GM23248 (cell line): ENCODE measurements at regions of chr14 and their contacts with region 1.

Region 1: DNA sequence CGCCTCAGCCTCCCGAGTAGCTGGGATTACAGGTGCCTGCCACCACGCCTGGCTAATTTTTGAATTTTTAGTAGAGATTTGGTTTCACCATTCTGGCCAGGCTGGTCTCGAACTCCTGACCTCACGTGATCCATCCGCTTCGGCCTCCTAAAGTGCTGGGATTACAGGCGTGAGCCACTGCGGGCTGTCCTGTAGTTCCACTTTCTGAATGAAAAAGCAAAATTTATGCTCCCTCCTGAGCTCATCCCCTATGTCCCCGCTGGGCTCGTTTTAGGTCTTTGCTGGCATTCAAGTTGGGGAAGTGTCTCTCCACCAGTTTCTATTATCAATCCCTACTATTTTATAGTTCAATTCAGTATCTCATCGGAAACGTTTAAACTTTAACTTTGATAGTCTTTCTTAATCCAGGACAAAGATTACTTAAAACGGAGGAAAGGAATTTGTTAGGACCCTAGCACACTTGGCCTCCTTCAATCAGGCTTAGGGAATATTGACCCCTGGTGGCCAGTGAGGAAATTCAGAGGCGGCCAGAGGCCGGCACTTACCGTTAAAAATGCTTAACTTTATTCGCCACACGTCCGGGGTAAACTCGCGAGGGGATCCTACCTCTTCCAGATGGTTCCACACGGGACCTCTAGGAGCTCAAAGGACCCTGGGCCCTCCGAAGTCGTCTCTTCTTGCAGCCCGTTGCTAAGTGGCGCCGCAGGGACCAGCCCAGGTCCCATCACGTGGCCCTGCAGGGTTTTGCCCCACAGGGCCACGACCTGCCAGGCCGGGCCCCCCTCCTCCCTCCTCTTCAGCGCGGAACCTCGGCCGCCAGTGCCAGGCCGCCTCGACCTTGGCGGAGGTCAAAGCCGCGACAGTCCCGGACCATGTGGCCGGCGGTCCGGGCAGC is 11.4 kb upstream of the DNAL1 start:
- DNase-seq: peak; percentile 81
- H3K4me3 ChIP-seq: peak overlapping the region; percentile 70
- H3K27ac ChIP-seq: no peak overlapping the region
- H3K4me1 ChIP-seq: 0 out of 2 replicates have a peak, but pooled peaks cover 3% of the 10 kb centered on the region
- H3K27me3 ChIP-seq: no peaks in the 10 kb centered on the region

Region 2: DNA sequence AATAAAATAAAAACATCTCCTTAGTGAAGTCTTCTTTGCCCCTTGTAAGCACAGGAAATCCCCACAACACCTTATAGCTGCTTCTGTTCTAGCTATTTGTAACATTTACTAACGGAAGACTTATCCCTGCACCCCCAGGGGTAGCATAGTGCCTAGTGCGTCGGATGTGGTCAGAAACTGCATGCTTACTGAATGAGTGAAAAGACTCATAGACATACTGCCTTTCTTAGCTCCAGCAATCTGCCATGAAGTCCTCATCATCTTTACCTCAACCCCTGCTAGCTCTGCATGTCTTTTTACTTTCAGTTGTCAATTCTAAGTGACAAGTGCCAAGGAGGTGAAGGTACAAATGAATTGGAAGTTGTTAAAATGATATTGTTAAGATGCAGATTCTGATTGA is 129.7 kb before region 1 on chr14:
- in situ Hi-C with region 1: loop called (anchors 10 kb)
- DNase-seq: peak; percentile 59
- H3K4me3 ChIP-seq: no peak overlapping the region
- H3K27ac ChIP-seq: no peak overlapping the region
- H3K4me1 ChIP-seq: no peaks in the 10 kb centered on the region
- H3K27me3 ChIP-seq: no peaks in the 10 kb centered on the region

Region 3: DNA sequence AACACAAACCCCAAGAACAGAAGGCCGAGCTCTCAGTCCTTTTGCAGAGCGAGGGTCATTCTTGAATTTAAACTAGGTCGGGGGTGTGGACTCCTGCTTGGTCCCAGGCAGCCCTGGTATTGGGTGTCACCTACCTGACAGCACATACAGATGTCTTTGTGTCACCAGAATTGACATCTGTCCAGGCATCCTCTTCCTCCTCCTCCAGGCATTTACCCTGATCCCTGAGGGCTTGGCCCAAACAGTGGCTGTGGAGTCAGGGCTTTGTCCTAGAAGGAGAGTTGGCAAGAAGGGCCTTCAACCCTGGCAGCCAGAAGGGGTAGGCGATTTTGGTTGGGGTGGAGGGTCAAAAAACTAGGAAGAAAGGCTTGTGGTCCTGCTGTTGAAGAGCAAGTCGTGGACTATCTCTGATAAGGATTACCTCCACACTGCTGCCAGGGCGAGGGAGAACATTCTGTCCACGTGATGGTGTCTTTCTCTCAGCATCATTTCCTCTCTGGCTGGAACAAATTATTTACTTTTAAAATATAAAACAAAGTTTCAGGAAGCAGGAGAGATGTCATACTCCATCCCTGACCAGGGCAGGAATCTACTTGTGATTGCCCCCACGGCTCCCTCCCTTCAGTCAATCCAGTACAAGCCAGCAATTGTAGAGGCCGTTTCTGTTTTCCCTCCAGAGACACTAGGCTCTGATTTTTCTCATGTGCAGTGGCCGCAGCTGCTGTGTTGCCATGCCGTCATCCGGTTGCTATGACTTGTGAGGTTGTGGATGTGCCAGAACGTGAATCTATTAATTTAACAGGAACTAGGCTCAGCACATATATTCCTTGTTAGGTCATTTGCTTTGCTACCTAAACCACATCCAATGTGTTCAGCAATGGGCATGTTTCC is 156.6 kb after region 1 on chr14:
- in situ Hi-C with region 1: no loop called
- DNase-seq: peak; percentile 98
- H3K4me3 ChIP-seq: peak overlapping the region; percentile 34
- H3K27ac ChIP-seq: peak overlapping the region; percentile 92
- H3K4me1 ChIP-seq: peaks cover 43% of the 10 kb centered on the region
- H3K27me3 ChIP-seq: no peaks in the 10 kb centered on the region

Region 4: GRCh38 chr14:74608959-74609611 is 975.7 kb after region 1 on chr14:
- in situ Hi-C with region 1: no loop called
- DNase-seq: peak; percentile 86
- H3K4me3 ChIP-seq: peak overlapping the region; percentile 97
- H3K27ac ChIP-seq: no peak overlapping the region
- H3K4me1 ChIP-seq: peaks cover 54% of the 10 kb centered on the region
- H3K27me3 ChIP-seq: no peaks in the 10 kb centered on the region

Region 5: DNA sequence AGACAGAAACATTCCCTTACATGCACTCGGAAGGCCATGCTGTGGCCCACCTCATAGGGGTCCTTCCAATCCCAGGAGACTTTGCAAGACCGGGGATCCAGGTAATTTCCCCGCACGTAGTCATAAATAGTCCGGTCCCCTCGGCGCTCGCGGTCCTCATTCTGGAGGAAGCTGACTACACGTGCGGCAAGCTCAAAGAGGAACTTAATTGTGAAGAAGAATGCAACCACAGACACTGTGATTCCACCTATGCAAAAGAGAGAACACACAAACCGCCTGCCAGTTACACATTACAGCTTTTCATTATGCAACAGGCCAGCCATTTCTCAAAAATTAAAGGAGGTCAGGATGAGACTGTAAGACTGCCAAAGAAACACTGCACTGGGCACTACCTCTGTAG is 1051.1 kb after region 1 on chr14:
- in situ Hi-C with region 1: no loop called
- DNase-seq: no peak
- H3K4me3 ChIP-seq: no peak overlapping the region
- H3K27ac ChIP-seq: no peak overlapping the region
- H3K4me1 ChIP-seq: no peaks in the 10 kb centered on the region
- H3K27me3 ChIP-seq: no peaks in the 10 kb centered on the region